ENCODE measurements at regions of chr1 and their contacts with region 1.

Region 1: GRCh38 chr1:160112357-160112756 is 3.2 kb upstream of the ATP1A2 start:
- DNase-seq: no peak
- ATAC-seq: no peak
- H3K4me3 ChIP-seq: no peak overlapping the region
- H3K27ac ChIP-seq: peak overlapping the region; percentile 46
- H3K4me1 ChIP-seq: peaks cover 35% of the 10 kb centered on the region
- H3K27me3 ChIP-seq: no peaks in the 10 kb centered on the region
- CTCF ChIP-seq: no peak

Region 2: DNA sequence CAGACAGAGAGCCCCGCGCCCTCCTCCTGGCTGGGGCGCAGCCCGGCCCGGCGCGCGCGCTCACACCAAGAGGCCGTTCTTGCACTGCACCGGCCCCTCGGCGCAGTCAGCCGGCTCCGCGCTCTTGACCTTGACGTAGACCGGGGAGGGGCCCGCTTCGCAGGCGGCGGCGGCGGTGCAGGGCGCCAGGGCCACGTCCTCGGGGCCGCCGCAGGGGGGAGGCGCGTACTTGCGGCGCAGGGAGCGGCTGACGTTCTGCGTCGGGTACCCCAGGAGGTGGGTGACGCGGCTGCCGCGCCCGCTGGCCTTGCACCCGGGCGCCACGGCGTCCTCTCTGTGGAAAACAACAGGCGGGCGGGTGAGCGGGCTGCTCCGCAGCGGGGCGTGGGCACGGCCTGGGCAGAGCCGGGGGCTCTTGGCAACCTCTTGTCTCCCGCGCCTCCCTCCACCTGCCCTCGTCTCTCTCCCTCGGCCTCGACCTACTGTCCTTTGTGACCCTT is 257.6 kb before region 1 on chr1:
- intact Hi-C with region 1: no loop called
- DNase-seq: peak; percentile 86 to 92
- ATAC-seq: peak; percentile 93 to 98 (median 95)
- H3K4me3 ChIP-seq: peak overlapping the region; percentile 81
- H3K27ac ChIP-seq: peak overlapping the region; percentile 83
- H3K4me1 ChIP-seq: peaks cover 9% of the 10 kb centered on the region
- H3K27me3 ChIP-seq: peaks cover 0 to 1% (median 0%) of the 10 kb centered on the region in 3 donors
- CTCF ChIP-seq: peak; percentile 20

Region 3: DNA sequence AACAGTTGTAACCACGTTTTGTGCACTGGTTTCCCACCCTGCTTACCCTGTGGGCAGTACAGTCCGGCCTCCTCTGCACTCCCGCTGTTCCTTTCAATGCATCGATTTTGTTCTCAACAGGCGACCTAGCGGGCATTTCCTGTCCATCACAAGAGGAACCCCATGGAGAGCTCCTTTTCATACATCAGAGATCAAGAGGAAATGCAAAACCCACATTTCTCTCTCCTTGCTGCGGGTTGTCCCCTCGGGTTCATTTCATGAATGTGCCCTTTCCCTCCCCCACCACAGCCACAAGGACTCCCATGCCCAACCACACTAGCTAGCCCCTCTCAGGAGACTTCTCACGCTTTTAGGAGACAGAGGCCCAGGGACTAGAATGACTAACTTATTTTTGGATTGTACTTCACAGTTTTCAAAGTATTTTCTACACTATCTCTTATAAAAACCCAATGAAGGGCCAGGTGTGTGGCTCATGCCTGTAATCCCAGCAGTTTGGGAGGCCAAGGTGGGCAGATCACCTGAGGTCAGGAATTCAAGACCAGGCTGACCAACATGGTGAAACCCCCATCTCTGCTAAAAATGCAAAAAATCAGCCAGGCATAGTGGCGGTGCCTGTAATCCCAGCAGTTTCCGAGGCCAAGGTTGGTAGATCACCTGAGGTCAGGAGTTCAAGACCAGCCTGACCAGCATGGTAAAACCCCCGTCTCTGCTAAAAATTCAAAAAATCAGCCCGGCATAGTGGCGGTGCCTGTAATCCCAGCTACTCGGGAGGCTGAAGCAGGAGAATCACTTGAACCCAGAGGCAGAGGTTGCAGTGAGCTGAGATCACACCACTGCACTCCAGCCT is 57.4 kb after region 1 on chr1:
- intact Hi-C with region 1: loop called in 1 of 2 experiments (anchors 5 kb)
- DNase-seq: no peak
- ATAC-seq: no peak
- H3K4me3 ChIP-seq: no peak overlapping the region
- H3K27ac ChIP-seq: no peak overlapping the region
- H3K4me1 ChIP-seq: no peaks in the 10 kb centered on the region
- H3K27me3 ChIP-seq: no peaks in the 10 kb centered on the region
- CTCF ChIP-seq: no peak